ENCODE measurements at regions of chr5 and their contacts with region 1.

Region 1: GRCh38 chr5:72556351-72557166 is 49.3 kb upstream of the ZNF366 start:
- DNase-seq: peak; percentile 45 to 69
- ATAC-seq: peak; percentile 73 to 90 (median 82)
- H3K4me3 ChIP-seq: peak overlapping the region in 9 of 10 donors; percentile 21 to 52 (median 44)
- H3K27ac ChIP-seq: peak overlapping the region in 8 of 10 donors; percentile 43 to 81 (median 57)
- H3K4me1 ChIP-seq: peaks cover 9 to 39% (median 20%) of the 10 kb centered on the region in 9 donors
- H3K27me3 ChIP-seq: no peaks in the 10 kb centered on the region
- CTCF ChIP-seq: peak in 2 of 9 donors; percentile 25 to 33

Region 2: DNA sequence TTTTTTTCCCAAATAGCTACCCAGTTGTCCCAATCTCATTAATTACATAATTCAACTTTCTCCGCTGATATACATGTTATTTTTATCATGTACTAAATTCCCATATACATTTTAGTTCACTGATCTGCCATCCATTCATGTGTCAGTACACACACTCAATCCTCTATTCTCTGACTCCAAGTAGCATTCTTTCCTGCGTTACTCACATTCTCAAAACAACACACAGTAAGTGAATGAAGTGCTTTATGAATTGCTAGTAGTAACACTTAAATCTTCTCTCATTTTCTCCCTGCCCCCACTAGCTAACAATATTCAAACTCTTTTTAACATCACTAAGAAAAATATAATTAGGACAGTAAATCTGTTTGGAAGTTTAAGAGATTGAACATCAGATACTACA is 58.3 kb before region 1 on chr5:
- intact Hi-C with region 1: no loop called
- DNase-seq: no peak
- ATAC-seq: no peak
- H3K4me3 ChIP-seq: no peak overlapping the region
- H3K27ac ChIP-seq: no peak overlapping the region
- H3K4me1 ChIP-seq: peaks cover 0 to 49% (median 27%) of the 10 kb centered on the region in 9 donors
- H3K27me3 ChIP-seq: no peaks in the 10 kb centered on the region
- CTCF ChIP-seq: no peak

Region 3: DNA sequence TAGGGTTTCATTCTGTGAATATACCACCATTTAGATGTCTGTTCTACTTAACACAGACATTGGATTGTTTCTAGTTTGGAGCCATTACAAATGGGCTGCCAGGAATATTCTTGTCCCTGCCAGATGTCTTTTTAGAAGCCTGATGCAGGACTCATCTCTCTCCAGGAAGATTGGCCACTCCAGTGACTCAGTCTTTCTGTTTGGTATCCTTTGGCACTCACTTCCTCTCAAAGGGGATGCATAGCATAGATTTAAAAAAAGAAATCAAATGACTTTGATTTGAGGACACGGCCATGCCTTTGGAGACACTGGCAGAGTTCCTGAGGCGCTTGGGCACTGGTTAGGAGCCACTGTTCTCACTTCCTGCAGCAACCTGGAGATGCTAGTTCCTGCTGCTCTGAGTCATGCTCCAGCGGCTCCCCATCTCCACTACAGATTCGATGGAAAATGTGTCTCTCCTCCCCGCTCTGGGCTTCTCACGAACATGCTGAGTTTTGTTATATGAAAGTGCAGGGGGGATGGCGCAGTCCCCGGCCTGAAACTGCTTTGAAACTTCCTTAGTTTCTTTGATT is 45.9 kb before region 1 on chr5:
- intact Hi-C with region 1: no loop called
- DNase-seq: peak in 1 of 2 donors; percentile 23
- ATAC-seq: peak in 4 of 8 donors; percentile 27 to 75 (median 66)
- H3K4me3 ChIP-seq: no peak overlapping the region
- H3K27ac ChIP-seq: peak overlapping the region in 8 of 10 donors; percentile 15 to 92 (median 80)
- H3K4me1 ChIP-seq: peaks cover 10 to 61% (median 40%) of the 10 kb centered on the region in 9 donors
- H3K27me3 ChIP-seq: no peaks in the 10 kb centered on the region
- CTCF ChIP-seq: no peak

Region 4: GRCh38 chr5:72752909-72753308 is 196.3 kb after region 1 on chr5:
- intact Hi-C with region 1: no loop called
- DNase-seq: no peak
- ATAC-seq: no peak
- H3K4me3 ChIP-seq: no peak overlapping the region
- H3K27ac ChIP-seq: no peak overlapping the region
- H3K4me1 ChIP-seq: no peaks in the 10 kb centered on the region
- H3K27me3 ChIP-seq: no peaks in the 10 kb centered on the region
- CTCF ChIP-seq: no peak

Region 5: DNA sequence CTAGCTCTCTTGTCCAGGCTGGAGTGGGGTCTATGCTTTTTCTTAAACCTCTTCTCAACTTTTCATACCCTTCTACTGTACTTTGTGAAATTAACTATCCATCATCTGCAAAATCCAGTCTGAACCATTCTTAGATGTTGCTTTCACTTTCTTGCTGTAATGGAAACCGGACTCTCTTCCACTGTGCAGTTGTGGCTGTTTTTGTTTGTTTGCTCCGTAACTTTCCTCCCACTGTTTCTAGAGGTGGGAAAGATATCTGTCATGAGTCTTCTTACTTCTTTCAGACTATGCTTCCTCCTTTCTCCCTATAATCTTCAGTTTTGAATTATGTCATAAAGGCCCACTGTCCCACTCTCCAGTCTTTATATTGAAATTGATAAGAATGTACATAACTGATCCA is 266.4 kb after region 1 on chr5:
- intact Hi-C with region 1: loop called in 2 of 10 experiments (anchors 5 to 10 kb)
- DNase-seq: no peak
- ATAC-seq: no peak
- H3K4me3 ChIP-seq: no peak overlapping the region
- H3K27ac ChIP-seq: no peak overlapping the region
- H3K4me1 ChIP-seq: peaks cover 0 to 44% (median 33%) of the 10 kb centered on the region in 9 donors
- H3K27me3 ChIP-seq: no peaks in the 10 kb centered on the region
- CTCF ChIP-seq: no peak

Region 6: DNA sequence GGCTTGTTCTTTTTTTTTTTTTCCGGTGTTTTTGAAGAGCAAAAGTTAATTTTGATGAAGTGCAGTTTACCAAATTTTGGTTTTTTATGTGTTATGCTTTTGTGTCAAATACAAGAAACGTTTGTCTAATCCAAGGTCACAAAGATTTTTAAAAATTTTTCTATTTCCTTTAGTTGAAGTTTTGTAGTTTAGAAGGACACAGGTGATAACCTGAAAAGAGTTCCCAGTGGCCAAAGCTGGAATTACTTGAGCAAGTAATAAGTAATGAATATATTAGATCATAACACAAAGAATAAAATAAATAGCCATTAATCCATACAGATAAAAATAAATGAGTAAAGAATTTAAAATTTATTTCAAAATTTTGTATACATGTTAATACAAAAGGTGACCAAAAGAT is 470.8 kb after region 1 on chr5:
- intact Hi-C with region 1: loop called in 1 of 10 experiments (anchors 5 kb)
- DNase-seq: no peak
- ATAC-seq: no peak
- H3K4me3 ChIP-seq: no peak overlapping the region
- H3K27ac ChIP-seq: no peak overlapping the region
- H3K4me1 ChIP-seq: peaks cover 0 to 6% (median 0%) of the 10 kb centered on the region in 9 donors
- H3K27me3 ChIP-seq: no peaks in the 10 kb centered on the region
- CTCF ChIP-seq: peak in 2 of 9 donors; percentile 7 to 13

Region 7: DNA sequence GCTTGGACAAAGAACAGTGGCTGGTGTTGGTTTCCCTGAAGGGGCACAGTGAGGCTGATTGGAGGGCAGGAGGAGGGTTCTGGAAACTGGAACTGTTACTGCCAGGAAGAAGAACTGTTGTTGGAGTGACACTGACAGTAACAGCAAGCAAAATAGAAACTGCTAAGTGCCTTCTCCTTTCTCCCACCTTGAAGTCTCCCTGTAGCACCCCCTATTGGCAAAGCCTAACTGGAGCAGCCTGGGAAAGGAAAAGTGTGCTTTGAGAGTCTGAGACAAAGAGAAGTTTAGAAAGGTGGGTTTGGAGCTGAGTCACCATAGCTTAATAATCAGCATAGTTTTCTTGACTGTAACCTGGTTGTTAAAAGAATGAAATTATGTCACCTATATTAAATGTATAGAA is 614.0 kb after region 1 on chr5:
- intact Hi-C with region 1: no loop called
- DNase-seq: no peak
- ATAC-seq: no peak
- H3K4me3 ChIP-seq: no peak overlapping the region
- H3K27ac ChIP-seq: no peak overlapping the region
- H3K4me1 ChIP-seq: no peaks in the 10 kb centered on the region
- H3K27me3 ChIP-seq: peaks cover 0 to 89% (median 27%) of the 10 kb centered on the region in 7 donors
- CTCF ChIP-seq: peak in 5 of 9 donors; percentile 11 to 59 (median 35)

Measured in heart right ventricle (tissue), 16 donors.